Activated CD4-positive, alpha-beta memory T cell treated with anti-CD3 and anti-CD28 coated beads for 36 hours (primary cell): ENCODE measurements at regions of chr17 and their contacts with region 1.

Region 1: DNA sequence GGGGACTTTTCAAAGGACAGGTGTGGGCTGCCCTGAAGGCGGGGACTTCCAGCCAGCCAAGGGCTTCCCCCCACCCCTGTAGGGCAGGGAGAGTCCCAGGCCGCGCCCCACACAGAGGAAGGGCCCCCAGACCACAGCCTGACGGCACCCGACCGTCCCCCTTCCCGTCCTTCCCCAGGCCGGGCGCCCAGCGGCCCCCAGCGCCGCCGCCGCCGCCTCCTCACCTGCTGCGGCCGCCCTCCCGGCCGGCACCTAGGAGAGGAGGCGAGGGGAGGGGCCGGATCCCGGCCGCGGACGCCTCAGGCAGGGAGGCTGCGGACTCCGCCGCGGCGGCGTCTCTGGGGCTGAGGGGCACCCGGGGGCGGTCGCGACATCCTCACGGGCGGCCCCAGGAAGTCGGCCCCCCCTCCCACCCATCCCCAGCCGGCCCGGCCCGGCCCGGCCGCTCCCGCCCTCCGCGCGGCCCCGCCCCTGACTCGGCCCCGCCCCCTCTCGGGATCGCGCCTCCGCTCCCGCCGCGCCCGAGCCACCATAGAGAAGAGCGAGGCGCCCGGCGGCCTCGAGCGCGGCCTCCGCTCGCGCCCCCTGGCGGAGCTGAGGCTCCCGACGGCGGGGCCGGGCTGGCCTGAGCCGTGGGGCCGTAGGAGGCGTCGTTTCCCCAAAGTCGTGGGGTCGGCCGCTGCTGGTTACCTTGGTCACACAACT is 25.5 kb upstream of the RFFL start:
- DNase-seq: peak; percentile 93
- H3K4me3 Mint-ChIP-seq: peak overlapping the region; percentile 91
- H3K27ac Mint-ChIP-seq: peak overlapping the region; percentile 96
- H3K4me1 Mint-ChIP-seq: peaks cover 43% of the 10 kb centered on the region
- H3K27me3 Mint-ChIP-seq: no peaks in the 10 kb centered on the region

Region 2: GRCh38 chr17:34980681-34981537 is 108.1 kb before region 1 on chr17:
- CTCF ChIA-PET with region 1: interaction called, 14 read pairs
- POLR2A ChIA-PET with region 1: no interaction called
- intact Hi-C with region 1: loop called (anchors 1 kb)
- DNase-seq: peak; percentile 78
- H3K4me3 Mint-ChIP-seq: peak overlapping the region; percentile 90
- H3K27ac Mint-ChIP-seq: peak overlapping the region; percentile 93
- H3K4me1 Mint-ChIP-seq: peaks cover 52% of the 10 kb centered on the region
- H3K27me3 Mint-ChIP-seq: no peaks in the 10 kb centered on the region

Region 3: GRCh38 chr17:35022536-35023063 is 66.4 kb before region 1 on chr17:
- CTCF ChIA-PET with region 1: interaction called, 43 read pairs
- POLR2A ChIA-PET with region 1: interaction called, 24 read pairs
- intact Hi-C with region 1: loop called (anchors 1 kb)
- DNase-seq: peak; percentile 90
- H3K4me3 Mint-ChIP-seq: peak overlapping the region; percentile 81
- H3K27ac Mint-ChIP-seq: peak overlapping the region; percentile 100
- H3K4me1 Mint-ChIP-seq: peaks cover 46% of the 10 kb centered on the region
- H3K27me3 Mint-ChIP-seq: no peaks in the 10 kb centered on the region

Region 4: DNA sequence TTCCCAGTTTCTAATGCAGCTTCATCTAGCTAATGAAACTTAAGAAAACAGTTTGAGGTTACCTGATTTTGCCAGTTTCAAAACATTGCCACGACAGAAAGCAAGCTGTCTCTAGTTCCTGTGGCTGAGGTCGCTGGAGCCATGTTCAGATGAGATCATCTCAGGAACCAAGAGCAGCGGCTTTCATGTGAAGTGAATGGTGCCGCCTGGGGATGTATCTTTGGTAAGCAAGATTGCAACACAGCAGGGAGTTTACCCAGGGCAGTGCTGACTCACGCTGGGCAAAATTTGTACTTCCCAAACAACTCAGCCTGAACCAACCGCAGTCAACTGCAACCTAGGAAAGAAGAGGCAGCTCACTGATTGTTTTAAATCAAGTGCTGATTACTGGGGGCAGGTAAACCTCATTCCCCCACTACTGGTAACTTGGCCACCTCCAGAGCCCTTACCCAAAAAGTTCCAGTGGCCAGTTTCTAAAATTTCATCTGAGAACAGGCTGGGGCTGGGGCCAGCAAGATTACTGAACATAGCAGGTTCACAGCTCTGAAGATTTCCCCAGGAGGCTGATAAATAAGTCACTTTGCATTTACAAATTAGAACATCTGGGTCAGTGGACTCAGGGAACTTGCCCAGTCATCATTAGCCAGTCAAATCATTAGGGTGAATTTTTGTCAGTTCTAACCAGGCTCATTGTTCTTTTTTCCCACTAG is 25.4 kb before region 1 on chr17 and contains the start of gene RFFL:
- CTCF ChIA-PET with region 1: interaction called, 15 read pairs
- POLR2A ChIA-PET with region 1: interaction called, 9 read pairs
- intact Hi-C with region 1: loop called (anchors 1 kb)
- DNase-seq: peak; percentile 95
- H3K4me3 Mint-ChIP-seq: peak within 1 kb of the TSS; percentile 35
- H3K27ac Mint-ChIP-seq: peak within 1 kb of the TSS; percentile 76
- H3K4me1 Mint-ChIP-seq: peaks cover 65% of the 10 kb centered on the region
- H3K27me3 Mint-ChIP-seq: no peaks in the 10 kb centered on the region
- total RNA-seq, gene RFFL: 30.5 to 32.8 TPM

Region 5: DNA sequence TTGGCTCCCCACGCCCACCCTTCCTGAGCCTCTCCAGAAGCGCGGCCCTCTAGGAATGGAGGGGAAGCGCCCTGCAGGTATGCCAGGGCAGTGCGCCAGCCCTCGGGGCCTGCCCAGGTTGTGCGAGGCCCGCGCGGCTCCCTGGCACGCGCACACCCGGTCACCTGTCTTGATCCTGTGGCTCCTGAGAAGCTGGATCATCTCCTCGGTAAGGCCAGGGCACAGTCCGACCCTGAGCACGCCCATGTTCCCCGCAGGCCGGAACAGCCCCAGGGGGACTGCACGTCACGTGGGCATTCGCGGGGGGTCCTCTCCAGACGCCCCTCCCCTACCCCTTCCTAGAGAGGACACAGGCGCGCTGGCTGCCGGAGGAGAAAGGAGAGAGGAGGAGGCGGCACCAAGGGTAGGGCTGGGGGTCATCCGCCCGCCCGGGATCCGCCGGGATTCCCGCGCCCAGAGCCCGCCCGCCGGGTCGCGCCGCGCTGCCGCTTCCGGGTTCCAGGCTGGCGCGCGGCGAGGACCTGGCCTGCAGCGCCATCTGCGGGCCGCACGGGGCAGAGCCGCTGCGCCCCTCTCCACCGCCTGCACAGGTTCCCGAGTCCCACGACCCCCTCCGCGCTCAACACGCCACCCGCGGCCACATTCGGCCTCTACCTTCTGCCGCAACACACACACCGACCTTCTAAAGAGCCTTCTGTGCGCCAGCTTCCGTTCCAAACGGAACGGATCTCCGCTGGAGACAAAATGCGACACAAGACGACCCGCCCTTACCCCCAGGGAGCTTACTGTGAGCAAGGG is 30.5 kb after region 1 on chr17 and contains the start of gene RAD51D:
- CTCF ChIA-PET with region 1: interaction called, 34 read pairs
- POLR2A ChIA-PET with region 1: interaction called, 6 read pairs
- intact Hi-C with region 1: loop called (anchors 1 kb)
- DNase-seq: peak; percentile 85
- H3K4me3 Mint-ChIP-seq: peak within 1 kb of the TSS; percentile 86
- H3K27ac Mint-ChIP-seq: peak within 1 kb of the TSS; percentile 84
- H3K4me1 Mint-ChIP-seq: peaks cover 40% of the 10 kb centered on the region
- H3K27me3 Mint-ChIP-seq: no peaks in the 10 kb centered on the region
- total RNA-seq, gene RAD51D: 29.7 to 36.7 TPM

Region 6: GRCh38 chr17:35404360-35404759 is 315.3 kb after region 1 on chr17:
- CTCF ChIA-PET with region 1: no interaction called
- POLR2A ChIA-PET with region 1: no interaction called
- intact Hi-C with region 1: no loop called
- DNase-seq: no peak
- H3K4me3 Mint-ChIP-seq: no peak overlapping the region
- H3K27ac Mint-ChIP-seq: no peak overlapping the region
- H3K4me1 Mint-ChIP-seq: no peaks in the 10 kb centered on the region
- H3K27me3 Mint-ChIP-seq: no peaks in the 10 kb centered on the region